Transverse colon (tissue), 4 donors: ENCODE measurements at regions of chr10 and their contacts with region 1.

Region 1: DNA sequence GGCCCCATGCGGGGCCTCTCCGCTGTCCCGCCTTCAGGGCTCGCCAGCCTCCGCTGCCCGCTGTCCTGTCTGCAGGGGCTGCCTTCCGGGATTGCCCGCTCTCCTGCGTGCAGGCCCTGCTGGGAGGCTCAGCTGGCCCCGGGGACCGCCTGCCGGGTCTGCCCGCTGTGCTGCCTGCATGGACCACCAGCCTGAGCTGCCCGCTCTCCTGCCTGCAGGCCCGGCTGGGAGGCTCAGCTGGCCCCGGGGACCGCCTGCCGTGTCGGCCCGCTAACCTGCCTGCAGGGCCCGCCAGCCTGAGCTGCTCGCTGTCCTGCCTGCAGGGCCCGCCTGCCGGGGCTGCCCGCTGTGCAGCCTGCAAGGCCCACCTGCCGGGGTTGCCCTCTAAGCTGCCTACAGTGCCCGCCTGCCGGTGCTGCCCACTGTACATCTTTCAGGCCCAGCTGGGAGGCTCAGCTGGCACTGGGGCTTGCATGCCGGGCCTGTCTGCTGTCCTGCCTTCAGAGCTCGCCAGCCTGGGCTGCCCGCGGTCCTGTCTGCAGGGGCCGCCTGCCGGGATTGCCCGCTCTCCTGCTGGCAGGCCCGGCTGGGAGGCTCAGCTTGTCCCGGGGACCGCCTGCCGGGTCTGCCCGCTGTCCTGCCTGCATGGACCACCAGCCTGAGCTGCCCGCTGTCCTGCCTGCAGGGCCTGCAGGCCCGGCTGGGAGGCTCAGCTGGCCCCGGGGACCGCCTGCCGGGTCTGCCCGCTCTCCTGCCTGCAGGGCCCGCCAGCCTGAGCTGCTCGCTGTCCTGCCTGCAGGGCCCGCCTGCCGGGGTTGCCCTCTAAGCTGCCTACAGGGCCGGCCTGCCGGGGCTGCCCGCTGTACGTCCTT is 165.1 kb downstream of the GLRX3 start:
- DNase-seq: no peak
- H3K4me3 ChIP-seq: peak overlapping the region in 2 of 4 donors; percentile 47 to 49
- H3K27ac ChIP-seq: peak overlapping the region in 3 of 4 donors; percentile 17 to 88 (median 82)
- H3K4me1 ChIP-seq: no peaks in the 10 kb centered on the region
- H3K27me3 ChIP-seq: no peaks in the 10 kb centered on the region
- CTCF ChIP-seq: no peak
- EP300 ChIP-seq: no peak
- POLR2A ChIP-seq: no peak

Region 2: GRCh38 chr10:130202984-130203621 is 98.2 kb before region 1 on chr10:
- in situ Hi-C with region 1: loop called in 1 of 4 experiments (anchors 25 kb)
- intact Hi-C with region 1: no loop called
- DNase-seq: no peak
- H3K4me3 ChIP-seq: no peak overlapping the region
- H3K27ac ChIP-seq: no peak overlapping the region
- H3K4me1 ChIP-seq: no peaks in the 10 kb centered on the region
- H3K27me3 ChIP-seq: peaks cover 7% of the 10 kb centered on the region
- CTCF ChIP-seq: no peak
- EP300 ChIP-seq: no peak
- POLR2A ChIP-seq: no peak

Region 3: GRCh38 chr10:130326954-130327353 is 25.7 kb after region 1 on chr10:
- in situ Hi-C with region 1: no loop called
- intact Hi-C with region 1: no loop called
- DNase-seq: no peak
- H3K4me3 ChIP-seq: no peak overlapping the region
- H3K27ac ChIP-seq: no peak overlapping the region
- H3K4me1 ChIP-seq: no peaks in the 10 kb centered on the region
- H3K27me3 ChIP-seq: no peaks in the 10 kb centered on the region
- CTCF ChIP-seq: no peak
- EP300 ChIP-seq: no peak
- POLR2A ChIP-seq: no peak